ENCODE measurements at regions of chr19 and their contacts with region 1.

Region 1: GRCh38 chr19:47348819-47349795 is at the start of gene DHX34:
- DNase-seq: peak; percentile 98
- H3K4me3 ChIP-seq: peak within 1 kb of the TSS; percentile 61
- H3K27me3 ChIP-seq: no peaks in the 10 kb centered on the region
- CTCF ChIP-seq: peak; percentile 100
- polyA plus RNA-seq, gene DHX34: 4.1 and 6.4 TPM in 2 replicates

Region 2: DNA sequence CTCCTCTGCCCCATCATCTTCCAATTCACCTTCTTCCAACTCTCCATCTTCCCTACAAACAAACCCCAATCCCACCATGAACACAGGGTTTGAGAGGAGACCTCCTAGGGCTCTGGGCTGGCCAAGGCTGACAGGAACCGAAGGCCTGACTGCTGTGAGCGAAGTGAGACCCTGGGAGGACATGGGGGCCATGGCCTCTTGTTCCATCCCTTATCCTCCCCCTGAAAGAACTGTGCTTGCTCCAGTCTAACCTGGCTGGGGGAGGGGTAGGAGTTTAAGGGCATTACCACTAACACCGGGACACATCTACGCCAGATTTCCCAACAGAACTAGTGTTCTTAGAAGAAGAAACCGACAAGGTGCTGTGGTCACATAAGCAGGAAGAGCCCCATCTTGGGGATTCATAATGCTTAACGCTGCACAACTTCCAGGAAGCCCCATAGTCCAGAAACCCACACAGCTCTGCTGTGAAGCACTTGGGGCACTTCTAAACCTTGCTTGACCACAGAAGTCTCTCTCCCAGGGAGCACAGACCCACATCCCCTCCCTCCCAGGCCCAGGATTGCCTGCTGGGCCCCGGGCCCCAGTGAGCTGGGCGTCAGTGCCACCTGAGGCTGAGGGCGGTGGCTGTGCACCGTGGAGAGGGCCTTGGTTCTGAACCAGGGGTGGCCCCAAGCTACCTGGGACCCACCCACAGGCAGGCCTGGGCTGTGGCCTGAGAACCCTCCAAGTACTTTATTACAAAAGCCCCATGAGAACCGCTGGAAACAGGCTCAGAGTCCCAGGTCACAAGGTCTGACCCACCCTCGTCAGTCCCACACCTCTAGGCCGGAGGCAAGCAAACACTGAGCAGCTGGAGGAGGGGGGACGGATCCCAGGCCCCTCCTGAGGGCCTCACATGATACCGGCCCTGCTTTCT is 254.3 kb before region 1 on chr19:
- CTCF ChIA-PET with region 1: no interaction called
- POLR2A ChIA-PET with region 1: no interaction called
- DNase-seq: no peak
- H3K4me3 ChIP-seq: no peak overlapping the region
- H3K27me3 ChIP-seq: no peaks in the 10 kb centered on the region
- CTCF ChIP-seq: no peak

Region 3: GRCh38 chr19:47296036-47296435 is 53.1 kb before region 1 on chr19:
- CTCF ChIA-PET with region 1: interaction called, 10 read pairs
- POLR2A ChIA-PET with region 1: interaction called, 3 read pairs
- DNase-seq: no peak
- H3K4me3 ChIP-seq: no peak overlapping the region
- H3K27me3 ChIP-seq: no peaks in the 10 kb centered on the region
- CTCF ChIP-seq: peak; percentile 75

Region 4: GRCh38 chr19:47330466-47330869 is 18.6 kb before region 1 on chr19:
- CTCF ChIA-PET with region 1: interaction called, 32 read pairs
- POLR2A ChIA-PET with region 1: no interaction called
- DNase-seq: no peak
- H3K4me3 ChIP-seq: no peak overlapping the region
- H3K27me3 ChIP-seq: peaks cover 2% of the 10 kb centered on the region
- CTCF ChIP-seq: no peak

Region 5: DNA sequence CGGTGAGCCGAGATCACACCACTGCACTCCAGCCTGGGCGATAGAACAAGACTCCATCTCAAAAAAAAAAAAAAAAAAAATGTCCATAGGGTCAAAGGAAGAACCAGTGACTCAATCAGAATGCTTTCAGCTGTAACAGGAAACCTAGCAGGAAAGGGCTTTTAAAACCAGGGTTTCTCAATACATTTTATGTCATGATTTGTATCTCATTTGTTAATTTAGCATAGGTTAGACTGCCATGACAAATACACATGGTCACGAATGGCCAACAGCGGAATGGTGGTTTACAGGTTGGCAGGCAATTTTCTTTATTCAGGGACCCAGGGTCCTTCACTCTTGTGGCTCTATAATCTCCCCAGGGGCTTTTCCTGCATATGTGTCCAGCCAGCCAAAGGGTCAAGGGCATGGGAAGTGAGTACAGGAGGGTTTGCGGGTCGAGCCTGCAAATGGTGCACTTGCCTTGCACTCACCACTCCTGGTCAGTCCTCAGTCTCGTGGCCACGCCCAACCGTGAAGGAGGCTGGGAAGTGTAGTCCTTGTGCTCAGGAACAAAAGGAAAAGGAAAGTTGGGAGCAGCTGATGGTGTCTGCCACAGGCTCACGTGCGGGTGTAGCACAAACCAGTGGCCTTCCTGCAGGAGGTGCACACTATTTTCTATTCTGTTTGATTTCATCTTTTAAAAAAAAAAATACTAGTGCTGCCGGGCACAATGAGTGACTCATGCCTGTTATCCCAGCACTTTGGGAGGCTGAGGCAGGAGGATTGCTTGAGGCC is 14.8 kb after region 1 on chr19:
- CTCF ChIA-PET with region 1: interaction called, 16 read pairs
- POLR2A ChIA-PET with region 1: no interaction called
- DNase-seq: no peak
- H3K4me3 ChIP-seq: no peak overlapping the region
- H3K27me3 ChIP-seq: no peaks in the 10 kb centered on the region
- CTCF ChIP-seq: no peak

Region 6: GRCh38 chr19:47381653-47382279 is 32.7 kb after region 1 on chr19:
- CTCF ChIA-PET with region 1: interaction called, 10 read pairs
- POLR2A ChIA-PET with region 1: no interaction called
- DNase-seq: no peak
- H3K4me3 ChIP-seq: no peak overlapping the region
- H3K27me3 ChIP-seq: no peaks in the 10 kb centered on the region
- CTCF ChIP-seq: no peak

Region 7: GRCh38 chr19:47406711-47407416 is 57.8 kb after region 1 on chr19:
- CTCF ChIA-PET with region 1: no interaction called
- POLR2A ChIA-PET with region 1: no interaction called
- DNase-seq: no peak
- H3K4me3 ChIP-seq: no peak overlapping the region
- H3K27me3 ChIP-seq: no peaks in the 10 kb centered on the region
- CTCF ChIP-seq: no peak

Region 8: GRCh38 chr19:47719047-47719859 is 370.1 kb after region 1 on chr19:
- CTCF ChIA-PET with region 1: no interaction called
- POLR2A ChIA-PET with region 1: interaction called, 20 read pairs
- DNase-seq: peak; percentile 99
- H3K4me3 ChIP-seq: peak overlapping the region; percentile 28
- H3K27me3 ChIP-seq: no peaks in the 10 kb centered on the region
- CTCF ChIP-seq: no peak